WTC11 (cell line): ENCODE measurements at regions of chr9 and their contacts with region 1.

Region 1: DNA sequence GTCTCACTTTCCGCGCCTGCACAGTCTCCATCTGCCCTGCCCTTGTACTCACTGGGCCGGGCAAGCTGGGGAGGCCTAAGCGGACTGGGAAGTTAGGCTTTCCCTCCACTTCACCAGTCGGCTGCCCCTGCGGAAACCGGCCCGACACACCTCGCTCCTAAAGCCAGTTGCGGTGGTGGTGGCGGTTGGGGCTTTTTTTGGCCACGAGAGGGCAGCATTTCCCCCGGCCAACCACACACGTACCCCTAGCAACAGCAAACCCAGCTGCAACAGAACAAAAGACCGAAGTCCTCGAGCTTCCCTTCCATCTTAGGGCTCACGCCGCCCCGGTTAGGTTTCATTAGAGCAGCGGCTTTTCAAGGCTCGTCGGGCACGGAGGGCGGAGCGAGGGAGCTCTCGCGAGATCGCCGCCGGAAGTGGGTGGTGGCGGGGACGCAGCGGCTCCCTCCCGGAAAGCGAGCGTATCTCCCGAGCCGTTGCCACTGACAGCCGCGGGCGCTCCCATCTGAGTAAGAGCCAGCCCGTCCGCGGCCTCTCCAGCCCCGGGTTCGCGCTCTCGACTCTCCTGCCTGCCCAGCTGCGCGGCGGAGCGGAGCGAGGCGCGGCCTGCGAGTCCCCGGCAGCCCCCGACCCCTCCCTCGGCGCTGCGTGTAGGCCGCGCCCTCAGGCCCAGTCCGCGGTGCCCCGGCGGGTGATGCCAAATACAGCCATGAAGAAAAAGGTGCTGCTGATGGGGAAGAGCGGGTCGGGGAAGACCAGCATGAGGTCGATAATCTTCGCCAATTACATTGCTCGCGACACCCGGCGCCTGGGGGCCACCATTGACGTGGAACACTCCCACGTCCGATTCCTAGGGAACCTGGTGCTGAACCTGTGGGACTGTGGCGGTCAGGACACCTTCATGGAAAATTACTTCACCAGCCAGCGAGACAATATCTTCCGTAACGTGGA is at the start of gene RRAGA:
- DNase-seq: peak; percentile 95
- ATAC-seq: peak; percentile 89
- H3K4me3 Mint-ChIP-seq: peak within 1 kb of the TSS; percentile 87
- H3K27ac Mint-ChIP-seq: peak within 1 kb of the TSS; percentile 97
- H3K4me1 Mint-ChIP-seq: peaks cover 40% of the 10 kb centered on the region
- H3K27me3 Mint-ChIP-seq: no peaks in the 10 kb centered on the region
- CTCF ChIP-seq: peak; percentile 80
- total RNA-seq, gene RRAGA: 48.0 to 50.1 TPM (median 48.7 TPM) in 3 replicates

Region 2: GRCh38 chr9:19028835-19029451 is 20.3 kb before region 1 on chr9:
- CTCF ChIA-PET with region 1: interaction called, 10 read pairs
- POLR2A ChIA-PET with region 1: no interaction called
- DNase-seq: no peak
- ATAC-seq: peak; percentile 83
- H3K4me3 Mint-ChIP-seq: no peak overlapping the region
- H3K27ac Mint-ChIP-seq: no peak overlapping the region
- H3K4me1 Mint-ChIP-seq: no peaks in the 10 kb centered on the region
- H3K27me3 Mint-ChIP-seq: no peaks in the 10 kb centered on the region; the same call in 1 of the 2 replicates
- CTCF ChIP-seq: peak; percentile 55

Region 3: DNA sequence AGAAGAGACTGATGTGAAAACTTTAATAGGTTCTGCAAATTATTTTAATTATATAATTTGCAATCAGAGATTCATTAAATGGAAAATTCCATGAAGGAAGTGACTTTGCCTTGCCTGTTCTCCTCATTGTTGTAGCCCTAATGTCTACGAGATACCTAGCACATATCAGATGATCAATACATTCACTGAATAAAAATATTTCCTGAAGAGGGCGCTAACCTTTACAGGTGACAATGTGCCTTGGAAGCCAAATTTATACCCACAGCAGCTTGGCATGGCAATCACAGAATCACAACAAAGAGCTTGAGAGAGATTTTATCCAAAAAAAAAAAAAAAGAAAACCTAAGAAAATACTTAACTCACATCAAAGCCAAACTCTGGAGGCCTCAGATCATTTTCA is 36.1 kb after region 1 on chr9:
- CTCF ChIA-PET with region 1: interaction called, 10 read pairs
- POLR2A ChIA-PET with region 1: no interaction called
- DNase-seq: no peak
- ATAC-seq: peak; percentile 71
- H3K4me3 Mint-ChIP-seq: no peak overlapping the region
- H3K27ac Mint-ChIP-seq: no peak overlapping the region
- H3K4me1 Mint-ChIP-seq: no peaks in the 10 kb centered on the region
- H3K27me3 Mint-ChIP-seq: no peaks in the 10 kb centered on the region
- CTCF ChIP-seq: 0 out of 2 replicates have a peak, but pooled peaks have one; percentile 24

Region 4: DNA sequence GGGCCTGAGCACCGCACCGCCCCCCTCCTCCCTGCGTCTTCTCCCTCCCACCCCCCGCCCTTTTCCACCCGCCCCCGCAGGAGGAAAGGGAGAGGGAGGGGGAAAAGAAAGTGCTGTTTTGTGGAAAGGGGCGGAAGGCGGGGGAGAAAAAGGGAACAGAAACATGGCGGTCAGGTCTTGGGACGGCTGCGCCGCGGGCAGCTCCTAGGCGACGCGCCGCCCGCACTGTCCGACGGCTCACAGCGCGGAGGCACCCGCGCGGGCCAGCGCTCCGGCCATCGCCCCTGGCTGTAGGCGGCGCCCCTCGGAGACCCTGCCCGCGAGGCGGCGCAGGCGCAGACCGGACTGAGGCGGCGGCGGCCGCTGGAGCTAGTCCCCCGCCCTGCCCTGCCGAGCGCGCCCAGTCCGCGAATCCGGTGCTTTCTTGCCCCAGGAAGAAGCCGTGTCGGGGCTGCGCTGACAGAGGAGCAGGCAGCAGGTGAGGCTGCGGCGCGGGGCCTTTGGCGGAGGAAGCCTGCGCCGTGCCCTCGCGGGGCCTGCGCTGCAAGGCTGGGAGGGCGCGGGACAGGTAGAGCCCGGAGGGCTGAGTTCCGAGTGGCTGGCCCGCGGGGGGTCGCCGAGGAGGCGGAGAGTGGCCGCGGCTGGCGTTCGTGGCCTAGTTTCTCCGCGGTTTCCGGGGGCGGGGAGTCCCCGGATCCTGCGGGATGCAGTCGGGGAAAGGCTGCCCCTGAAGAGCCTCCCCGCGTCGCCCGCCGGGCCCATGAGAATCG is 181.3 kb after region 1 on chr9 and contains the start of gene DENND4C:
- CTCF ChIA-PET with region 1: interaction called, 10 read pairs
- POLR2A ChIA-PET with region 1: interaction called, 7 read pairs
- DNase-seq: peak; percentile 91
- ATAC-seq: peak; percentile 81
- H3K4me3 Mint-ChIP-seq: peak within 1 kb of the TSS; percentile 87
- H3K27ac Mint-ChIP-seq: peak within 1 kb of the TSS; percentile 99
- H3K4me1 Mint-ChIP-seq: peaks cover 14% of the 10 kb centered on the region
- H3K27me3 Mint-ChIP-seq: no peaks in the 10 kb centered on the region
- CTCF ChIP-seq: no peak
- total RNA-seq, gene DENND4C: 21.0 to 22.6 TPM (median 21.7 TPM) in 3 replicates

Region 5: DNA sequence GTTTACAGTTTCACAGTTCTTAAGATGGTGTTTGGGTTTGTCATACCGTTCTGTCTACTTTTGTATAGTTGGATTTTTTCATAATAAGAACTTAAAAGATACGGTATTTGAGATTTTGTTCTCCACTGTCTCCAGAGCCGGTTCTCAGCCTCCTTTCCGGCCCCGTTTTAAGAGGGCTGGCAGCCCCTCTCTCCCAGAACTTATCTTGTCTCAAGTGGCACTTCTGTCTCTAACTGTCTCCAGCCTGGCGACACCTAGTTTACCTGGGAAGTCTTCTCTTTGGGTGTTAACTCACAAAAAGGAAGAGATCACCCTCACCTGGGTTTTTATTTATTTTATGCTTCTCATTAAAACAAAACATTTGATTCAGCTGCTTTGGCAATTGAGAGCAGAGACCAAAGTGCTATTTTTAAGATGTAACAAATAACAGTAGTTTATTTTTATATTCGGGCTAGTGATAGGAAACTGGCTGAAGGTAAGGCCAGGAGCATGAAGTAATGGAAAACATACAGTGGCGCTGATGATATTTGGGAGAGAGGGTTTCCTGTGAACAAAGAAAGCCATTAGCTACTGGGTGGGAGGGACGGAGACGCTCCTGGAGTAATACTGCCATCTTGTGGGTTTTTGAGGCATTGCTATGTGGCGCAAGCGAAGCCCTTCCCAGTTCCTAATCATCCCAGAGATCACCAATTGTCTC is 407.9 kb after region 1 on chr9:
- CTCF ChIA-PET with region 1: interaction called, 12 read pairs
- POLR2A ChIA-PET with region 1: no interaction called
- DNase-seq: peak; percentile 69
- ATAC-seq: peak; percentile 93
- H3K4me3 Mint-ChIP-seq: no peak overlapping the region
- H3K27ac Mint-ChIP-seq: peak overlapping the region; percentile 44; the same call in 1 of the 2 replicates
- H3K4me1 Mint-ChIP-seq: peaks cover 31% of the 10 kb centered on the region
- H3K27me3 Mint-ChIP-seq: no peaks in the 10 kb centered on the region
- CTCF ChIP-seq: peak; percentile 90